ENCODE measurements at regions of chr13 and their contacts with region 1.

Region 1: GRCh38 chr13:43878892-43879754 is at the start of gene CCDC122:
- DNase-seq: peak; percentile 80 to 94 (median 90)
- ATAC-seq: peak; percentile 67 to 92 (median 88)
- H3K4me3 ChIP-seq: peak within 1 kb of the TSS; percentile 67 to 97 (median 79)
- H3K27ac ChIP-seq: peak within 1 kb of the TSS; percentile 85 to 99 (median 94)
- H3K4me1 ChIP-seq: peaks cover 0 to 53% (median 11%) of the 10 kb centered on the region in 12 donors
- H3K27me3 ChIP-seq: no peaks in the 10 kb centered on the region
- CTCF ChIP-seq: peak in 1 of 12 donors; percentile 6
- POLR2A ChIP-seq: no peak
- total RNA-seq, gene CCDC122: 2.3 to 10.0 (median 4.9) TPM

Region 2: DNA sequence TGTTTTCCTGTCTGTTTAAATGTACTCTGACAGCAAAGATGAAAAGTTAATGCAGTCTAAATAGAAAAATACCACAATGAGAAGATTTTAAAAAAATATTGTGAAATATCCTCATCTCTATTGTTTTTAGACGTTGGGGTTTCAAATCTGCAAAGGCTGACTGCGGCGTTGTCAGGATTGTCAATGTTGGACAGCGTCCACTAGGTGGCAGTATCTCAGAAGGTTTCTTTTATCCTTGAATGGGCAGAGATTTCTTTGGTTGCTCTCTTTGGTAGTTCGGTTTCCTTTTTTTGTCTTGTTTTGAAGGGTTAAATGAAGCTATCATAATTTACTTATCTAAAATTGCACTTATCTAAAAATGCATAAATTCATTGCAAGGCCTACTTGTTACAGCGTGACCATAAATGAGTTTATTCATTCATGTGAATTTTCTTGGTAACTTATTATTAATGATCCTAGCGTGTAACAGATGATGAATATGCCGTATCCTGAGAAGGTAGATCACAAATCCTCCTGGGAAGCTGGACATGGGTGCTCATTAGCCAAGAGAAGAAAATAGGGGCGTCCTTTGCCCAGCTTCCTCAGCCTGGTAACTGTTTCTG is 1284.1 kb before region 1 on chr13:
- intact Hi-C with region 1: loop called in 4 of 10 experiments (anchors 5 to 10 kb)
- DNase-seq: peak in 3 of 5 donors; percentile 23 to 37 (median 30)
- ATAC-seq: peak in 2 of 4 donors; percentile 50 to 63
- H3K4me3 ChIP-seq: no peak overlapping the region
- H3K27ac ChIP-seq: no peak overlapping the region
- H3K4me1 ChIP-seq: no peaks in the 10 kb centered on the region
- H3K27me3 ChIP-seq: peaks cover 0 to 27% (median 2%) of the 10 kb centered on the region in 9 donors
- CTCF ChIP-seq: peak; percentile 78 to 89 (median 85)
- POLR2A ChIP-seq: no peak

Region 3: GRCh38 chr13:42969558-42970172 is 909.5 kb before region 1 on chr13:
- intact Hi-C with region 1: loop called in 3 of 10 experiments (anchors 5 to 10 kb)
- DNase-seq: peak; percentile 70 to 86 (median 83)
- ATAC-seq: peak; percentile 71 to 92 (median 88)
- H3K4me3 ChIP-seq: no peak overlapping the region
- H3K27ac ChIP-seq: no peak overlapping the region
- H3K4me1 ChIP-seq: peaks cover 0 to 34% (median 10%) of the 10 kb centered on the region in 12 donors
- H3K27me3 ChIP-seq: no peaks in the 10 kb centered on the region
- CTCF ChIP-seq: peak; percentile 70 to 88 (median 82)
- POLR2A ChIP-seq: no peak

Region 4: DNA sequence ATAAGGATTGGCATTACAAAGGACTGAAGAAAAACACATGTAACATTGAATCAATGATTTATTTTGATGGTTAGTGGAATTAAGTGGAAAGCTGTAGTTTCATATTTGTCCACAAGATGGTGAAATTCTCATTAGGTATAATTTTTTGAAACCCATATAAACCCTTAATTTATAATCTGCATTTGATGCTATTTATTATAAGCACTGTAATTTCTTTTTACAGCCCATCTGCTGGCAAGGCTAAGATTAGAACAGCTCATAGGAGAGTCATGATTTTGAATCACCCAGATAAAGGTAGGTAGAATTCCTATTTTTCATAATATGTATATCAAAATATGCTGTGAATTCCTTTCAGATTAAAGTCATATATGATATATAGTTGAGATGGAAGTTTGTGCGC is 793.6 kb before region 1 on chr13:
- intact Hi-C with region 1: loop called in 3 of 10 experiments (anchors 10 kb)
- DNase-seq: no peak
- ATAC-seq: no peak
- H3K4me3 ChIP-seq: no peak overlapping the region
- H3K27ac ChIP-seq: no peak overlapping the region
- H3K4me1 ChIP-seq: peaks cover 0 to 22% (median 0%) of the 10 kb centered on the region in 12 donors
- H3K27me3 ChIP-seq: no peaks in the 10 kb centered on the region
- CTCF ChIP-seq: peak; percentile 59 to 75 (median 68)
- POLR2A ChIP-seq: no peak

Region 5: GRCh38 chr13:43196086-43196621 is 683.0 kb before region 1 on chr13:
- intact Hi-C with region 1: loop called in 1 of 10 experiments (anchors 5 kb)
- DNase-seq: peak in 4 of 5 donors; percentile 60 to 73 (median 60)
- ATAC-seq: peak; percentile 44 to 85 (median 80)
- H3K4me3 ChIP-seq: peak overlapping the region in 1 of 12 donors; percentile 1
- H3K27ac ChIP-seq: no peak overlapping the region
- H3K4me1 ChIP-seq: peaks cover 0 to 14% (median 0%) of the 10 kb centered on the region in 12 donors
- H3K27me3 ChIP-seq: peaks cover 0 to 4% (median 0%) of the 10 kb centered on the region in 9 donors
- CTCF ChIP-seq: peak in 7 of 12 donors; percentile 9 to 54 (median 34)
- POLR2A ChIP-seq: no peak

Region 6: DNA sequence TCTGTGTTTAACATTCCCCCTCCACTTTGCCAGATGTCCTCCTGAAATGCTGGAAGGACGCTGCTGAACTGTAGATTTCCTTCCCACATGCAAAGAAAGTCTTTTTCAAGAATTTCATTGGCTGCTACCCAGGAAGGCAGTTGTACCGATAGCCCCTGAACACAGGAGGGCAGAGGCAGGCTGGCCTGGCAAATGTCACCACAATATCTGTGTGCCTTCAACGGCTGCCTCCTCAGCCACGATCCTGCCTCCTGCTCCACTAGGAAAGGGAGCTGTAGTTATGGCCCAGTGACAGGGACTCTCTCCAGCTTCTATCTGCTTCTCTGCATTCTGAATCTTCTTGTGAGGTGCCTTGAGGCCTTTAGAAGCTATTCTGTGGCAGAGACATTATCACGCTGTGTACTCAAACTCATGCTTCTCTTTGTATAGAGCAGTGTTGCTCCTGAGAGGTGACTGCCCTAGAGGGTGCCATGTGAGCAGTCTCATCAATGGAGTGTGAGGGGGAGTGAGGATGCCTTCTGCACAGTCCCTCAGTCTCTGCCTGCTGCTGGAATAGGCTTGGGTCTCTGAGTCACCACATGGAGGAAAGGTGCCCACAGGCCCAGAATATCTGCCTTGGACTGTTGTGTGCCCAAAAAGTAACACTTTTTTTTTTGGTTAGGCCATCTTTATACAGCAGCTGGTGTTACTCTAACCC is 575.9 kb before region 1 on chr13:
- intact Hi-C with region 1: loop called in 3 of 10 experiments (anchors 10 kb)
- DNase-seq: peak; percentile 55 to 78 (median 68)
- ATAC-seq: peak; percentile 71 to 91 (median 90)
- H3K4me3 ChIP-seq: no peak overlapping the region
- H3K27ac ChIP-seq: peak overlapping the region in 7 of 12 donors; percentile 16 to 54 (median 35)
- H3K4me1 ChIP-seq: peaks cover 0 to 25% (median 9%) of the 10 kb centered on the region in 12 donors
- H3K27me3 ChIP-seq: no peaks in the 10 kb centered on the region
- CTCF ChIP-seq: peak; percentile 36 to 70 (median 54)
- POLR2A ChIP-seq: no peak

Region 7: GRCh38 chr13:43894438-43894837 is 15.3 kb after region 1 on chr13:
- intact Hi-C with region 1: no loop called
- DNase-seq: no peak
- ATAC-seq: no peak
- H3K4me3 ChIP-seq: no peak overlapping the region
- H3K27ac ChIP-seq: no peak overlapping the region
- H3K4me1 ChIP-seq: no peaks in the 10 kb centered on the region
- H3K27me3 ChIP-seq: no peaks in the 10 kb centered on the region
- CTCF ChIP-seq: peak in 3 of 12 donors; percentile 14 to 20 (median 17)
- POLR2A ChIP-seq: no peak

Region 8: GRCh38 chr13:43953370-43953769 is 74.2 kb after region 1 on chr13:
- intact Hi-C with region 1: no loop called
- DNase-seq: no peak
- ATAC-seq: no peak
- H3K4me3 ChIP-seq: no peak overlapping the region
- H3K27ac ChIP-seq: no peak overlapping the region
- H3K4me1 ChIP-seq: no peaks in the 10 kb centered on the region
- H3K27me3 ChIP-seq: no peaks in the 10 kb centered on the region
- CTCF ChIP-seq: no peak
- POLR2A ChIP-seq: no peak

Measured in heart left ventricle (tissue), 16 donors.